ENCODE measurements at regions of chr11 and their contacts with region 1.

Region 1: DNA sequence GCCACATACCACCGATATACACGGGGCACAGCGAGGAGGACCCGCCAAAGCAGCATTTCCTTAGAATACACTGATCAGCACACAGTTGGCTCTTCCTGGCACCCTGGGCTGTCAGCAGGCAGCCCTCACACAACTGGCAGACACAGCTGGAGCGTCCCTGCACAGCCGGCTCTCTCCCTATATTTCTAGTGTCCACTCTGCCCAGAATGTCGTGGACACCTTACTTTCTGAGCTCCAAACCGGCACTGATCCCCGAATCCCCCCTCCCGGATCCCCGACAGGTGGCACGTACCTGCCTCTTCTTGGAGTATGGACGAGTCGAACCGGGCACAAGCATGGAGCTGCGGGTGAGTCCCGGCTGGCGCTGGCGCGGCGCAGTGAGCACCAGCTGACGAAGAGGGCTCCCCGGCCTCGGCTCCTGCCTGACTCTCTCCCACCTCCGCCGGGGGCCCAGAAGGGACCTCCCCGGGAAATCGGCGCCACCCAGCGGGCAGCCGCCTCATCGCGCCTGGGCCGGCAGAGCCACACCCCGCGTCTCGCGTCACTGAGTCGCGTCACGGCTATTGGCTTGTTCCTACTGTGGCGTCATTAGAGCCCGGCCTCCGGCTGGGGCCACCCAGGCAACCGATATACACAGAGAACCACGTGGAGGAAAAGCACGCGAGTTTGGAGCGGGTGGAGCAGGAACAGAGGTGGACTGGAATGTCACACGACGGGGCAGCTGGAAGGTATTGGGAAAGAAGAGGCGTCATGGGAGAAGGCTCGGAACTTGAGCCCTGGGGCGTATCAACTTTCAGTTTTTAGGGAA is at the start of gene USP2:
- DNase-seq: peak; percentile 94 to 99
- H3K4me3 ChIP-seq: peak within 1 kb of the TSS; percentile 59 to 64
- H3K27ac ChIP-seq: peak within 1 kb of the TSS; percentile 31 to 37
- H3K4me1 ChIP-seq: peaks cover 0 to 16% of the 10 kb centered on the region in 2 donors
- H3K27me3 ChIP-seq: no peaks in the 10 kb centered on the region
- CTCF ChIP-seq: peak; percentile 88 to 92 (median 90)
- total RNA-seq, gene USP2: not detected

Region 2: GRCh38 chr11:118883368-118884071 is 497.9 kb before region 1 on chr11 and contains the start of gene CXCR5:
- intact Hi-C with region 1: no loop called
- DNase-seq: no peak
- H3K4me3 ChIP-seq: no peak within 1 kb of the TSS
- H3K27ac ChIP-seq: peak within 1 kb of the TSS; percentile 95 to 96
- H3K4me1 ChIP-seq: peaks cover 6 to 28% of the 10 kb centered on the region in 2 donors
- H3K27me3 ChIP-seq: no peaks in the 10 kb centered on the region
- CTCF ChIP-seq: peak in 1 of 3 experiments; percentile 10
- total RNA-seq, gene CXCR5: not detected

Region 3: DNA sequence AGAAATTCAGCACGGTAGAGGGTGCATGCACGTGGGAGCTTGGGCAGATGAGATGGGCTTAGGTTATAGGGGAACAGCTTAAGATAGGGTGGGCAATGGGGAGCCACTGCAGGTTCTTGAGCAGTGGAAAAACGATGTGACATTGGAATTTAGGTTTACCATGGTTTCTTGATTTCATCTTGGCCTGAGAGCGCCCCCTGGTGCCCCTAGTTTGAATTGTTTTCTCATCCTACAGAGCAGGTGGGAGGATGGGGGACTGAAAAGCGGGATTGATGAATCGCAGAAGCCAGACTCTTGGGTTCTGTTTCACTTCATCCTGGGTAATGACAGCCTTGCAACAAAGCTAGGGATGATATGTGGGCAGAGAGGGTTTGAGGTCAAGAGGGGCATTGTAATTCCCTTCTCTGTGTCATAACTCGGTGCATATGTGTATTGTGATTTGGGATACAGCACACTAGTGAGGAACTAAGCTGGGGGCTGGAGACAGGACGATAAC is 57.8 kb before region 1 on chr11:
- intact Hi-C with region 1: loop called (anchors 2 kb)
- DNase-seq: peak in 1 of 2 donors; percentile 89
- H3K4me3 ChIP-seq: no peak overlapping the region
- H3K27ac ChIP-seq: peak overlapping the region in 1 of 2 donors; percentile 98
- H3K4me1 ChIP-seq: peaks cover 6 to 31% of the 10 kb centered on the region in 2 donors
- H3K27me3 ChIP-seq: no peaks in the 10 kb centered on the region
- CTCF ChIP-seq: peak; percentile 71 to 78 (median 76)

Region 4: GRCh38 chr11:119338318-119338907 is 43.0 kb before region 1 on chr11:
- intact Hi-C with region 1: loop called (anchors 5 kb)
- DNase-seq: peak in 1 of 2 donors; percentile 87
- H3K4me3 ChIP-seq: peak overlapping the region in 1 of 2 donors; percentile 94
- H3K27ac ChIP-seq: peak overlapping the region; percentile 88 to 96
- H3K4me1 ChIP-seq: peaks cover 13 to 38% of the 10 kb centered on the region in 2 donors
- H3K27me3 ChIP-seq: no peaks in the 10 kb centered on the region
- CTCF ChIP-seq: peak; percentile 75 to 88 (median 86)

Region 5: DNA sequence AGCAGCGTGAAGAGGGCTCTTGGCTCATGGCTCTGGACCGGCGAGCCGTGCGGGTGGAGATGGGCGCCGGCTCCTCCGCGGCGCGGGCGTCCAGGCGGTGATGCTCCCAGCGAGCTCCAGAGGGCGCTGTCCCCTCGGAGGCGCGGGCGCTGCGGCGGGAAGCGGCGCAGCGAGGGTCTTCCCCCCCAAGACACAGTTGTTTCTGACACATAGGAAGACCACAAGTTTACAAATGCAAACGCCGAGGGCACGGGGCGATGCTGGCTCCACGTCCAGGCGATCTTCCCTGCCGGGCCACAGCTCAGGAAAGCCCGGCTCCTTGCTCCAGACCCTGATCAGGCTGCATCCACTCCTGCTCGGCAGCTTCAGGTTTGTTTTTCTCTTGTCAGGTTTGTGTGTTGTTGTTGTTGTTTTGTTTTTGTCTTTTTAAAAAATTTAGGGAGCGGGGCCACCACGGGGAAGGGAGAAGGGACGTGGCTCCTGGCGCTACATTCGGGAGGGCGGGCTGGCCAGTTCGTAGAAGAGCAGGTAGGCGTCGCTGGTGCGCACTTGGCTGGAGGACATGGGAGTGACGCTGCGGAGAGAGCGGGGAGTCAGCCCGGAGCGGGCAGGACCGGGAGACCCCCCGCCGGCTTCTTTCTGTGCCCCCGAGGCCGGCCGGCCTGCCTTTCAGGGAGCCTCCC is 24.9 kb before region 1 on chr11:
- intact Hi-C with region 1: loop called (anchors 1 kb)
- DNase-seq: peak in 1 of 2 donors; percentile 89
- H3K4me3 ChIP-seq: peak overlapping the region; percentile 42 to 71
- H3K27ac ChIP-seq: no peak overlapping the region
- H3K4me1 ChIP-seq: peaks cover 0 to 6% of the 10 kb centered on the region in 2 donors
- H3K27me3 ChIP-seq: no peaks in the 10 kb centered on the region
- CTCF ChIP-seq: peak; percentile 85 to 87 (median 85)

Region 6: GRCh38 chr11:119474682-119475596 is 93.6 kb after region 1 on chr11:
- intact Hi-C with region 1: loop called (anchors 2 kb)
- DNase-seq: peak in 1 of 2 donors; percentile 63
- H3K4me3 ChIP-seq: no peak overlapping the region
- H3K27ac ChIP-seq: no peak overlapping the region
- H3K4me1 ChIP-seq: no peaks in the 10 kb centered on the region
- H3K27me3 ChIP-seq: no peaks in the 10 kb centered on the region
- CTCF ChIP-seq: peak; percentile 77 to 79 (median 79)

Measured in ascending aorta (tissue), 2 donors.